ENCODE measurements at regions of chr3 and their contacts with region 1.

Region 1: DNA sequence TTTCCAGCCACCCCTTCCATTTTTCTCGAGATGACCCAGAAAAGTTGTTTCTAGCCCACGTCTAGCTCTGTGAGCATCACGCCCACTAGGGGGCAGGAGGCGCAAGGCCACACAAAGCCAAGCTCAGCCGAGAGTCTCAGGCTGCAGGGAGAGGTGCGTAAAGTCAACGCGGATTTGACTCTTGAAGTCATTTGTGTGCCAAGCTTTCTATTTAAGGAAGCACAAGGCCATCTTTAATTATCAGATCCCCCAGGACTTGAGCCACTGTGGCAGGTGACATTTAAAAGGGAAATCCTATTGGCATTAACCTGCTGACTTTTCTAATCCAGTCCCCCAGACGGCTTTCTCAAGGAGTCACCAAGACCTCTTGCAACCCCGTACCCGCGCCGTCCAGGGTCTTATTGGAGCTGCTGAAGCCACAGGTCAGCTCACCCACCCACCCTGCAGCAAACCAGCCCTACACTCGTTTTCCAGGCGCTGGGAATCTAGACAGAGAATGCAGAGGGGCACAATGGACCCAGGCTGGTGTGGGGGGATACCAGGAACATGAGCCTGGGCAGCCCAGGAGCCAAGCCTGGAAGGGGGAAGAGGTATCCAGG is 62.1 kb downstream of the CAPN7 start:
- DNase-seq: peak; percentile 31
- H3K4me3 ChIP-seq: no peak overlapping the region
- CTCF ChIP-seq: peak; percentile 94

Region 2: GRCh38 chr3:15256861-15257341 is 11.2 kb before region 1 on chr3:
- CTCF ChIA-PET with region 1: interaction called, 115 read pairs
- POLR2A ChIA-PET with region 1: no interaction called
- DNase-seq: no peak
- H3K4me3 ChIP-seq: no peak overlapping the region
- CTCF ChIP-seq: no peak

Region 3: GRCh38 chr3:15325242-15325641 is 57.1 kb after region 1 on chr3:
- CTCF ChIA-PET with region 1: interaction called, 155 read pairs
- POLR2A ChIA-PET with region 1: no interaction called
- DNase-seq: no peak
- H3K4me3 ChIP-seq: no peak overlapping the region
- CTCF ChIP-seq: no peak

Region 4: DNA sequence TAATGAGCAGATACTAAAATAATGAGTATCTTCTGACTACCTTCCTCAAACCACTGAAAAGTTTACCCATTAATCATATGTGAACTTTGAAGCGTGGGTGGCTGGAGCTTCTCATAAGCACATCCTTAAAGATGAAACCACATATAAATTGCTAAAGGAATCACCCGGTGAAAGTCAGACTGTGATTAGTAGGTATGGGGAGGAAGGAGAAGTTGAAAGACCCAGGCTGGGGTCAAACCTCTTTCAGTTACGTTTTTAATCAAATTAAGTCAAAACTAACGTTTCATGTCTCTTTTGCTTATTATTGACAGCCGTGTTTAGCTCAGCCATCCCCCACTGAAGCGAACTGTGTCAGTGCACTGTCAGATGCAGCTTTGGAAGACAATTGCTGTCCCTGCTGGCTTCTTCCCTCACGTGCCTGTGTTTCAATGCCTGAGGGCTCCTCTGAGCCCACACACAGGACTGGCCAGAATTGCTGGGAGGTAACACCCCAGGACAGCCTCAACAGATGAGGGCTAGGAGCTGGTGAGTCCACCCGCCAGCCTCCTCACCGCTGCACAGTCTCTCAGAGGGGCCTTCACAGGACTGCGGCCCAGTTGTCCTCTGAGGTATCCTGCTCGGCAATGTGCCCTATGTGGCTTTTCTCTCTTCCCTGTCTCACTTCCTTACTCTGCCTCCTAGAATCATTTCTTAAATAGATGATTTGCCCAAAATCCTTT is 93.5 kb after region 1 on chr3:
- CTCF ChIA-PET with region 1: interaction called, 19 read pairs
- POLR2A ChIA-PET with region 1: interaction called, 3 read pairs
- DNase-seq: no peak
- H3K4me3 ChIP-seq: no peak overlapping the region
- CTCF ChIP-seq: no peak

Region 5: GRCh38 chr3:15384510-15385237 is 116.5 kb after region 1 on chr3:
- CTCF ChIA-PET with region 1: interaction called, 366 read pairs
- POLR2A ChIA-PET with region 1: no interaction called
- DNase-seq: no peak
- H3K4me3 ChIP-seq: no peak overlapping the region
- CTCF ChIP-seq: no peak

Region 6: GRCh38 chr3:15427182-15427880 is 159.2 kb after region 1 on chr3 and contains the starts of genes EAF1 and METTL6:
- CTCF ChIA-PET with region 1: interaction called, 12 read pairs
- POLR2A ChIA-PET with region 1: no interaction called
- DNase-seq: no peak
- H3K4me3 ChIP-seq: peak within 1 kb of the TSS; percentile 91
- CTCF ChIP-seq: peak; percentile 0

Region 7: DNA sequence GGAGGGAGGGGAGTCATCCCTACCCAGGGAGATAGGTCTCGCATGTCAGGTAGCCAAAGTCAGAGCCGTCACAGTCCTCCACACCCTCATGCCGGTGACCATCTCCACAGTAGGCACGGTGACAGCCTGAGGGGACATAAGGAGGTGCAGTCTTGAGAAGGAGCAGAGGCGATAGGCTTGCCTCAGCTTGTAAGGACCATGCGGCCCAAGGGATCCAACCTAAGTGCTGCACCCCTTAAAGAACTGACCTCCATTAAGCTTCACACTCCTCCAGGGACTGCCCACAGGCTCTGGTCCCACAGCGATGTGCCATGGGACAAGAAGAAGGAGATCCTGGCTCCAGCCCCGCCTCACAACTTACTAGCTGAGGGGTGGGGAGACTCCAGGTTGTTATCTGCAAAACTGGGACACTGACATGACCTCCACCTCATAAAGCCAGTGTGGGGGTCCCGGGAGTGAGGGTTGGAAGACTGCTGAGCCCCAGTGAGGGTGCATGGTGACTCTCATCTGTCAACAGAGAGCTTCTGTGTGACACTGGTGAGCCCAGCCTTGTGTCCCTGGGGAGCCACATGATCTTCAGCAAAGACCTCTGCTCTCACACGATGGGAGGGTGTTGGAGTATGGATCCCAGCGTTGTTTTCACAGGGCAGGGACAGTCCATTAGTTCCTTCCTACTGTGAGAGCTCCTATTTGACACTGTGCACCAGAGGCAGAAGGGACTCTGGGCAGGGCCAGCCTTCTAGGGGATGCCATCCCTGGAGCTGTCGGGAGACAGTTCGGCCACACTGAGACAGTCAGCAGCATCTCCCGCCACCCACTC is 185.9 kb after region 1 on chr3:
- CTCF ChIA-PET with region 1: no interaction called
- POLR2A ChIA-PET with region 1: no interaction called
- DNase-seq: no peak
- H3K4me3 ChIP-seq: no peak overlapping the region
- CTCF ChIP-seq: no peak